Activated CD4-positive, alpha-beta T cell treated with anti-CD3 and anti-CD28 coated beads for 36 hours (primary cell): ENCODE measurements at regions of chr7 and their contacts with region 1.

Region 1: GRCh38 chr7:32891800-32892520 is 400 bp upstream of the KBTBD2 start:
- DNase-seq: peak; percentile 99
- ATAC-seq: peak; percentile 67
- H3K4me3 Mint-ChIP-seq: peak overlapping the region; percentile 94
- H3K27ac Mint-ChIP-seq: peak overlapping the region; percentile 99
- H3K4me1 Mint-ChIP-seq: peaks cover 44% of the 10 kb centered on the region
- H3K27me3 Mint-ChIP-seq: no peaks in the 10 kb centered on the region

Region 2: GRCh38 chr7:32905175-32905662 is 13.3 kb after region 1 on chr7:
- CTCF ChIA-PET with region 1: interaction called, 22 read pairs
- POLR2A ChIA-PET with region 1: interaction called, 39 read pairs
- intact Hi-C with region 1: loop called (anchors 1 kb)
- DNase-seq: peak; percentile 84
- ATAC-seq: peak; percentile 93
- H3K4me3 Mint-ChIP-seq: peak overlapping the region; percentile 69
- H3K27ac Mint-ChIP-seq: peak overlapping the region; percentile 86
- H3K4me1 Mint-ChIP-seq: peaks cover 15% of the 10 kb centered on the region
- H3K27me3 Mint-ChIP-seq: no peaks in the 10 kb centered on the region

Region 3: GRCh38 chr7:33040803-33041516 is 149.0 kb after region 1 on chr7:
- CTCF ChIA-PET with region 1: interaction called, 4 read pairs
- POLR2A ChIA-PET with region 1: no interaction called
- intact Hi-C with region 1: loop called (anchors 1 to 2 kb)
- DNase-seq: peak; percentile 79
- ATAC-seq: peak; percentile 99
- H3K4me3 Mint-ChIP-seq: peak overlapping the region; percentile 66
- H3K27ac Mint-ChIP-seq: peak overlapping the region; percentile 77
- H3K4me1 Mint-ChIP-seq: peaks cover 62% of the 10 kb centered on the region
- H3K27me3 Mint-ChIP-seq: no peaks in the 10 kb centered on the region

Region 4: GRCh38 chr7:33101906-33102305 is 209.9 kb after region 1 on chr7:
- CTCF ChIA-PET with region 1: no interaction called
- POLR2A ChIA-PET with region 1: no interaction called
- intact Hi-C with region 1: no loop called
- DNase-seq: no peak
- ATAC-seq: no peak
- H3K4me3 Mint-ChIP-seq: no peak overlapping the region
- H3K27ac Mint-ChIP-seq: no peak overlapping the region
- H3K4me1 Mint-ChIP-seq: peaks cover 24% of the 10 kb centered on the region
- H3K27me3 Mint-ChIP-seq: no peaks in the 10 kb centered on the region

Region 5: GRCh38 chr7:33128990-33129805 is 237.2 kb after region 1 on chr7 and contains the start of gene BBS9:
- CTCF ChIA-PET with region 1: no interaction called
- POLR2A ChIA-PET with region 1: no interaction called
- intact Hi-C with region 1: loop called (anchors 1 to 5 kb)
- DNase-seq: peak; percentile 96
- ATAC-seq: peak; percentile 99
- H3K4me3 Mint-ChIP-seq: peak within 1 kb of the TSS; percentile 95
- H3K27ac Mint-ChIP-seq: peak within 1 kb of the TSS; percentile 89
- H3K4me1 Mint-ChIP-seq: peaks cover 16% of the 10 kb centered on the region
- H3K27me3 Mint-ChIP-seq: no peaks in the 10 kb centered on the region
- total RNA-seq, gene BBS9: 4.1 to 9.9 TPM